Activated B cell treated with CpG ODN at 0.5 μM for 24 hours (primary cell): ENCODE measurements at regions of chr11 and their contacts with region 1.

Region 1: DNA sequence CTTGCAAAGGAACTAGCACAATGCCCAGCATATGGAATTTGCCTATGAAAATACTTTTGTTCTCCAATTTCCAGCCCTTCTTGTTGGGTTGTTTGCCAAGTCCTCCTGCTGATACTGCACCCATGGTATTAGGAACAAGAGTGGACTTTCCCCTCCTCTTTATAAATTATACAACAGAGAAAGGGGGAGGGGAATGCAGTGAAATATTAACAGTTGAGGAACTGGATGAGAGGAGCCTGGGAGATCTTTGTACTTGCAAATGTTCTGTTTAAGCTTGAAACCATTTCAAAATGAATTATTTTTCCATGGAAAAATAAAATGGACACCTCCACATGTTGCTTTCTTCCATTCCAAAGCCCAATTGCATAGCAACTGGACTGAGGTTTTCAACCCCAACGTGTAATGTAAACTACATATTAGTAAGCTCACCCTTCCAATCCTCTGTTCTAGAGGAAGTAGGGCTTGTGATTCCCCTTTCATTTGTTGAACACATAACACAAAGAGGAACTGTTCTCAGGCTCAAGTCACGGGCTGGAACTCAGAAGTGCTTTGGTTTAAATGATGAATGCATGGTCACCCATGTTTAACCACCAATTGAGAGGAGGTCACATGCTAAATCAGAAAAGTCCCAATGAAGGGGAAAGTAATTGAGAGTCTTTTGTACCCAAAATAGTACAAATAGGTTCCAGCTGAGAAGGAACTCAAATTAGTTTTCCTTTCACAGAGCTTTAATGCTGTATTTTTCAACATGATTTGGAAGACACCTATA is 66.2 kb upstream of the ZC3H12C start:
- DNase-seq: no peak
- ATAC-seq: peak; percentile 95
- H3K4me3 Mint-ChIP-seq: peak overlapping the region; percentile 21
- H3K27ac Mint-ChIP-seq: peak overlapping the region; percentile 59
- H3K4me1 Mint-ChIP-seq: peaks cover 30% of the 10 kb centered on the region
- H3K27me3 Mint-ChIP-seq: peaks cover 34% of the 10 kb centered on the region
- CTCF ChIP-seq: no peak

Region 2: GRCh38 chr11:109864834-109865547 is 162.1 kb before region 1 on chr11:
- CTCF ChIA-PET with region 1: no interaction called
- POLR2A ChIA-PET with region 1: no interaction called
- intact Hi-C with region 1: loop called (anchors 1 kb)
- DNase-seq: no peak
- ATAC-seq: no peak
- H3K4me3 Mint-ChIP-seq: no peak overlapping the region
- H3K27ac Mint-ChIP-seq: peak overlapping the region; percentile 74
- H3K4me1 Mint-ChIP-seq: peaks cover 17% of the 10 kb centered on the region
- H3K27me3 Mint-ChIP-seq: no peaks in the 10 kb centered on the region
- CTCF ChIP-seq: no peak

Region 3: GRCh38 chr11:109946322-109946846 is 80.7 kb before region 1 on chr11:
- CTCF ChIA-PET with region 1: no interaction called
- POLR2A ChIA-PET with region 1: no interaction called
- intact Hi-C with region 1: loop called (anchors 1 kb)
- DNase-seq: peak; percentile 32
- ATAC-seq: peak; percentile 92
- H3K4me3 Mint-ChIP-seq: peak overlapping the region; percentile 68
- H3K27ac Mint-ChIP-seq: no peak overlapping the region
- H3K4me1 Mint-ChIP-seq: peaks cover 13% of the 10 kb centered on the region
- H3K27me3 Mint-ChIP-seq: peaks cover 14% of the 10 kb centered on the region
- CTCF ChIP-seq: no peak

Region 4: GRCh38 chr11:109984634-109985289 is 42.3 kb before region 1 on chr11:
- CTCF ChIA-PET with region 1: no interaction called
- POLR2A ChIA-PET with region 1: interaction called, 5 read pairs
- intact Hi-C with region 1: loop called (anchors 1 kb)
- DNase-seq: no peak
- ATAC-seq: peak; percentile 94
- H3K4me3 Mint-ChIP-seq: peak overlapping the region; percentile 17
- H3K27ac Mint-ChIP-seq: peak overlapping the region; percentile 55
- H3K4me1 Mint-ChIP-seq: peaks cover 19% of the 10 kb centered on the region
- H3K27me3 Mint-ChIP-seq: peaks cover 3% of the 10 kb centered on the region
- CTCF ChIP-seq: no peak

Region 5: DNA sequence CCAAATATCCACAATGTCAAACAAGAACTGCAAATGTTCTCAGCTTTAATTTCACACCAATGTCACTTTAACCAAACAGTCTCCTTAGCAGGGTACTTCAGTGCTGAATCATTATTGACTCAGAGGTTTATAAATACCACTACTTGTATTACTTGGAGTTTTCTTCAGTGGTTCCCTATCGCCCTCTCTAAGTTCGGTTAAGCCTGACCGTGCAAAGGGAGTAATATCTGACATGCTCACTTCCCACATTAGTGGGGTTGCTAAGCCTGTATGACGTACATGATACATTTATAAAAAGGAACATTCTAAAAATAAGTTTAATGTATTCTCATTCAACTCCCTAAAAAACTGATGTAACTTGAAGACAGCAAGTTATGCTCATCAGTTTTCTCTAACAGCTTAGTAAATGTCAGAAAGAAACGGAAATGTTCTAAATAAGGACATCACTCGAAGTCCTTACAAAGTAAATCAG is 27.0 kb before region 1 on chr11:
- CTCF ChIA-PET with region 1: no interaction called
- POLR2A ChIA-PET with region 1: interaction called, 4 read pairs
- intact Hi-C with region 1: loop called (anchors 1 kb)
- DNase-seq: no peak
- ATAC-seq: peak; percentile 90
- H3K4me3 Mint-ChIP-seq: no peak overlapping the region
- H3K27ac Mint-ChIP-seq: no peak overlapping the region
- H3K4me1 Mint-ChIP-seq: peaks cover 2% of the 10 kb centered on the region
- H3K27me3 Mint-ChIP-seq: peaks cover 12% of the 10 kb centered on the region
- CTCF ChIP-seq: no peak

Region 6: DNA sequence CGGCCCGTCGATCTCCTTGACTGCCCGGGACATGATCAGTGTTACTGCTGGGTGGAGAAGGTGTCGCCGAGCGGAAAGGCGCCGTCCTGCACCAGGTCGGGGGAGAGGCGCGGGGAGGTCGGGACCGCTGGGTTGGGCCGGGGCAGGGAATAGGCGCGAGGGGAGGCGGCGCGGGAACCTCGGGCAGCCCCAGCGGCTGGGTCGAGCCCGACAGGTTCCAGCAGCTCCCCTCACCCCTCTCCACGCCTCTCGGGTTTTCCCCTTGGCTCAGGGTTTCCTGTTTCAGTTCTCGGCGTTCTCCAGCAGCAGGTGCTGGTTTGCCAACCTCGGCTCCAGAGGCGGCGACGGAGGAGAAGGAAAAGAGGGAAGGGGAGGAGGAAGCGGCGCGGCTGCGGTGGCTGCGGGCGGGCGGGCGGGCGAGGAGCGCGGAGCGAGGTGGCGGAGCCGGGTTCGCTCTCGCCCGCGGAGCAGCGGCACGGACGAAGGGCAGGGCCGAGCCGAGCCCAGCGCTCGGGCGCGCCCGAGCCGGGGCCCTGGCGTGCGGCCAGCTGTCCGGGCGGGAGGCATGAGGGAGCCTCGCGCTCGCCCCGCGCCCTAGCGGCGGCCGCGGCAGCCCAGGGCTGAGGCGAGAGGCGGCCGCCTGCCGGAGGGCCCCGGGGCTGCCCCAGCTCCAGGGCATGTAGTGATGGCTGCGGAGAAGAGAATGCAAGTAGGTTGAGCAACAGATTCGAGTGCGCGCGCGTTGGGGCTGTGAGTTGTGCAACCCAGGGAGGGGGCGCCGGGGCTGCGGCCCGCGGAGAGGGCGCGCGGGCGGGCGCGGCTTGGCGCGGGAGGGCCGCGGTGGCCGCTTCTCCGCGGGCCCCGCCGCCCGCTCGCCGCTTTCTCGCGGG is 65.7 kb after region 1 on chr11 and contains the start of gene ZC3H12C:
- CTCF ChIA-PET with region 1: no interaction called
- POLR2A ChIA-PET with region 1: interaction called, 3 read pairs
- intact Hi-C with region 1: loop called (anchors 2 kb)
- DNase-seq: peak; percentile 40
- ATAC-seq: peak; percentile 79
- H3K4me3 Mint-ChIP-seq: peak within 1 kb of the TSS; percentile 88
- H3K27ac Mint-ChIP-seq: peak within 1 kb of the TSS; percentile 33
- H3K4me1 Mint-ChIP-seq: peaks cover 12% of the 10 kb centered on the region
- H3K27me3 Mint-ChIP-seq: peaks cover 43% of the 10 kb centered on the region
- CTCF ChIP-seq: no peak
- total RNA-seq, gene ZC3H12C: 0.83 and 0.95 TPM in 2 replicates

Region 7: DNA sequence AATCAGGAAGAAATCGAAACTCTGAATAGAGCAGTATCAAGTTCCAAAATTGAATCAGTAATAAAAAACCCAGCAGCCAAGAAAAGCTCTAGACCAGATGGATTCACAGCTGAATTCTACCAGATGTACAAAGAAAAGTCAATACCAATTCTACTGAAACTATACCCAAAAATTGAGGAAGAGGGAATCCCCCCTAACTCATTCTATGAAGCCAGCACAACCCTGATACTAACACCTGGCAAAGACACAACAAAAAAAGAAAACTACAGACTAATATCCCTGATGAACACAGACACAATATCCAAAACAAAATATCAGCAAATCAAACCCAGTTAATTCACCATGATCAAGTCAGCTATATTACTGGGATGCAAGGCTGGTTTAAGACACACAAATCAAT is 163.8 kb after region 1 on chr11:
- CTCF ChIA-PET with region 1: no interaction called
- POLR2A ChIA-PET with region 1: no interaction called
- intact Hi-C with region 1: loop called (anchors 5 kb)
- DNase-seq: no peak
- ATAC-seq: no peak
- H3K4me3 Mint-ChIP-seq: no peak overlapping the region
- H3K27ac Mint-ChIP-seq: no peak overlapping the region
- H3K4me1 Mint-ChIP-seq: peaks cover 11% of the 10 kb centered on the region
- H3K27me3 Mint-ChIP-seq: peaks cover 34% of the 10 kb centered on the region
- CTCF ChIP-seq: no peak